HEK293 (cell line): ENCODE measurements at regions of chr19 and their contacts with region 1.

Region 1: GRCh38 chr19:43101950-43102349 is 19.4 kb upstream of the PSG2 start:
- H3K4me3 ChIP-seq: no peak overlapping the region
- H3K27ac ChIP-seq: no peak overlapping the region
- H3K4me1 ChIP-seq: no peaks in the 10 kb centered on the region
- CTCF ChIP-seq: peak; percentile 66

Region 2: DNA sequence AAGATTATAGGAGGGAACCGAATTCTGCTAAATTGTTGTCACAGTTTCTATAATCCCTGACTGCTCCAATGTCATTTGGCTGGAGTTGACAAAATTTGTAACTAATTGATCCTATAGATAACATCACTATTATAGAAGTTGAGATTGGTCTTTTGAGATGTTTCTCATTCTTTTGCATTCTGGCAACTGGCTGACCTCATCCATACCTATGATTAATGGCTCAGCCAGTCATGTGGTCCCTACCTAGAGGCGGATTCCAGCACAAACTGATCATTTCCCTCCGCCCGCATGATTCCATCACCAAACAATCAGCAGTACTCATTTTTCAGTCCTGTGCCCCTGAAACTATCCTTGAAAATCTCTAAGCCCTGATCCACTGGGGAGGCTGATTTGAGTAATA is 23.6 kb before region 1 on chr19:
- CTCF ChIA-PET with region 1: interaction called, 31 read pairs
- POLR2A ChIA-PET with region 1: no interaction called
- H3K4me3 ChIP-seq: no peak overlapping the region
- H3K27ac ChIP-seq: no peak overlapping the region
- H3K4me1 ChIP-seq: no peaks in the 10 kb centered on the region
- CTCF ChIP-seq: no peak

Region 3: DNA sequence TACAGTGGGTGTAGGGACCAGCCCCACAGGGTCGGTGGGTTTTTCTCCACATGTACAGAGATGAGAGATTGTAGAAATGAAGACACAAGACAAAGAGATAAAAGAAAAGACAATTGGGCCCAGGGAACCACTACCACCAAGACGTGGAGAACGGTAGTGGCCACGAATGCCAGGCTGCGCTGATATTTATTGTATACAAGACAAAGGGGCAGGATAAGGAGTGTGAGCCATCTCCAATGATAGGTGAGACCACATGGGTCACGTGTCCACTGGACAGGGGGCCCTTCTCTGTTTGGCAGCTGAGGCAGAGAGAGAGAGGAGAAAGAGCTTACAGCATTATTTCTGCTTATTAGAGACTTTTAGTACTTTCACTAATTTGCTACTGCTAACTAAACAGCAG is 89.2 kb after region 1 on chr19:
- CTCF ChIA-PET with region 1: interaction called, 29 read pairs
- POLR2A ChIA-PET with region 1: no interaction called
- H3K4me3 ChIP-seq: no peak overlapping the region
- H3K27ac ChIP-seq: peak overlapping the region; percentile 92; the same call in 1 of the 2 replicates
- H3K4me1 ChIP-seq: peaks cover 7% of the 10 kb centered on the region
- CTCF ChIP-seq: no peak